AG04449 (cell line): ENCODE measurements at regions of chr13 and their contacts with region 1.

Region 1: GRCh38 chr13:106176117-106176516 is 359.3 kb downstream of the EFNB2 start:
- DNase-seq: peak; percentile 38
- H3K4me3 ChIP-seq: peak overlapping the region; percentile 23
- CTCF ChIP-seq: no peak

Region 2: DNA sequence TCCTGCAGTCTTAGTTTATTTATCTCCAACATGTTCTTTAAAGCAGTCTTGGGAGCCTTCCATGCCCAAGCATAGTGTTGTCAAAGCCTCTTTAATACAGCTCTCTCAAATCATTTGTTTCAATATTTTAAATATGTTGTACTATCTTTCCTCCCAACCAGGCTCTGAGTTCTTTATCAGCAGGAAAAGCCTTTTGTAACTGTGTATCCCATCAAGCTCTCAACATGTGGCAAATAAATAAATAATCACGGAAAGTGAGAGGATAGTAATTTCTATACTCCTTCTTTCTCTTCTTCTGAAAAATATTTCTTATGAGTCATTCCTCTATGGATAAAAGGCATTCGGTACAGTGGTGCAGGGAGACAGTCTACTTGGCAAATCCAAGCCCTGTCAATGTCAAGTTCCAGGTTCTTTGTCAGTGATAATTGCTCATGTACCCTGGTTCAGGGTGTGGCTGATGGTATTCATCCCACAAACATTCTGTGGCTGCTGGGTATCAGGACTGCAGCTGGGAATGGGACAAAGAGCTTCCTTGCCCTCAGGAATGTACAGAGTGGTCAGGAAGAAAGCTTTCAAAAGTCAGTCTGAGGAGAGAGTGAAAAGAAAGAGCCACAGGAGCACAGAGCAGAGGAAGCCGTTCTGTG is 24.9 kb before region 1 on chr13:
- CTCF ChIA-PET with region 1: no interaction called
- POLR2A ChIA-PET with region 1: interaction called, 10 read pairs
- DNase-seq: peak; percentile 78
- H3K4me3 ChIP-seq: no peak overlapping the region
- CTCF ChIP-seq: no peak

Region 3: DNA sequence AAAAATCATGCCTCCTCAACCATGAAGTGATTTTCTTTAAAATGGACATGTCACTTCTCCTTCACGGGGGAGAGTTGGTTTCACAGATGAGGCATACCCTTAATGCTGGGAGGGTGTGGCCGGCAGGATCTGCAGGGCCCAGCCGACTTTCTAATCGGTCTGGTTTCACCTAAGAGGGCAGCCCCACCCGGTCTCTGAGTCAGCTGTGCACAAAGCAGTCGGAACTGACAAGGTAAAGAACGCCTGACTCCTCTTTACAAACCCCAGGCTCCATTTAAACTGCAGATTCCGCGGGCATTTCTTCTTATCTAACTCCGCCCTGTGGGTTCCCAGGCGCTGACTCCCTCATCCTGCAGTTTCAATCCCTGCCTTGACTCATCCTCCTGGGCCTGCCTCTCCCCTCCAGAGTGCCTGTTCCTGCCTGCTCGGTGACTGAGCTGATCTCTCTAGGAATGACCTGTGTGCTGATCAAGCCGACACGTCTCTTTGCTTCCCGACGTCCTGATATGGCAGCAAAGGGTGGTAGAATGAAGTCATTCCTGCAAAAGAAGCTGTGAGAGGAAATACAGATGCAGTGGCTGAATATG is 295.9 kb after region 1 on chr13:
- CTCF ChIA-PET with region 1: no interaction called
- POLR2A ChIA-PET with region 1: no interaction called
- DNase-seq: peak; percentile 62
- H3K4me3 ChIP-seq: peak overlapping the region; percentile 45
- CTCF ChIP-seq: no peak